HCT116 (cell line): ENCODE measurements at regions of chr3 and their contacts with region 1.

Region 1: DNA sequence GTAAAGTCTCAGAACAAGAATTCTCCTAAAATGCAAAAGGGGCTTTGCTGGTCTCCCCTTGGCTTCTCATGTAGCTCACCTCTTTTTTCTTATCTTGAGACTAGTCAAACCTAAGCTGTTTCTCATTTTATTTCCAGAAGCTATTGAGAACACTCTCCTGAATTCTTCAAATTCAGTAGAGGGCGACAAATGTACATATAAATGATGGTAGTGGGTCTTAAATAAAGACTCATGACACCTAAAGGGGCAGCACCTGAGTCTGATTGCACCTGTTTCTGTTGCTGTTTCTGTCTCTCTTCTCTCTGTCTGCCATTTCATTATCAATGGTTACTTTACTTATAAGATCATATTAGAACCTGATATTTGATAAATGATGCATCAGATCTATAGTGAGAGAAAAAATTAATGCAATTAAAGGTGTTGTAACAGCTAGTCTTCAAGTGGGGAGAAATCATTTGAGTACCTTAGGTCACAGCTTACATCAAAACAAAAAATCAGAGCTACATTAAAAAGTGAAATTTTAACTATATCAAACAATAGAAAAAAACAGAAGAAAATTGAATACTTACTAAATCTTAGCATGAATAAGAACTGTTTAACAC is 7.0 kb downstream of the ADIPOQ start:
- DNase-seq: peak; percentile 35
- ATAC-seq: peak; percentile 90
- H3K4me3 ChIP-seq: no peak overlapping the region
- H3K27ac ChIP-seq: no peak overlapping the region
- H3K4me1 ChIP-seq: no peaks in the 10 kb centered on the region
- H3K27me3 ChIP-seq: peaks cover 25% of the 10 kb centered on the region
- CTCF ChIP-seq: peak; percentile 29 to 91 (median 59); a peak in 5 of 6 replicates
- POLR2A ChIP-seq: no peak
- RAD21 ChIP-seq: peak; percentile 92

Region 2: DNA sequence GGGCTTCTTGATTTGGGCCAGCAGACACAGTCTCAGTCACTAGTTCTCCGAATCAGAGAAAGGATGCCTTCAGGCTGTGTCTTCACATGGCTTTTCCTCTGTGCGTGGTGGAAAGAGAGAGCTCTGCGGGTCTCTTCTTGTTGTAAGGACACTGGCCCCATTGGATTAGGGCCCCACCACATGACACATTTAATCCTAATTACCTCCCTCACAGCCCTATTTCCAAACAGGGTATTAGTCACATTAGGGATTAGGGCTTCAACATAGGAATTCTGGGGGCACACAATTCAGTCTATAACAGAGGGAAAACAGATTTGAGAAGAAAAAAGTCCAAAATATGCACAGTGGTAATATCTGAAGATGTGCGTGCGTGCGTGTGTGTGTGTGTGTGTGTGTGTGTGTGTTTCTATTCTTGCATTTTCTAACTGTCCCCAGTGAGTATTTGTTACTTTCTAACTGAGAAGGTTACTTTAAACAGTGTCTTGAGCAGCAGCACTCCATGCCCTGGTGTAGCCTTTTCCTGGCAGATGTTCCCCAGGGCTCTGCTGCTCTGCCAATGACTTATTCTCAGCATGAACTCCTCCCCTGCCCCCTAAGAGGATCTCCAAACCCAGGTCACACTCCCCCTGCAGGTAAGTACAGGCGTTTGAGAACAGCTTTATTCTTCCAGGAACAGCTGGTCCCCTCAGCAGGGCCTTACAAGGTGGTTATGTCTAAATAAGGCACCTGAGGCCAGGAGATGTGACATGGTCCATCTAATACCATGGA is 216.9 kb after region 1 on chr3:
- CTCF ChIA-PET with region 1: interaction called, 8 read pairs
- POLR2A ChIA-PET with region 1: no interaction called
- RAD21 ChIA-PET with region 1: no interaction called
- intact Hi-C with region 1: loop called (anchors 5 kb)
- DNase-seq: peak; percentile 47
- ATAC-seq: peak; percentile 94
- H3K4me3 ChIP-seq: no peak overlapping the region
- H3K27ac ChIP-seq: no peak overlapping the region
- H3K4me1 ChIP-seq: peaks cover 0 to 9% of the 10 kb centered on the region in 2 experiments; a peak in 1 of 4 replicates
- H3K27me3 ChIP-seq: no peaks in the 10 kb centered on the region
- CTCF ChIP-seq: peak; percentile 28 to 69 (median 54); a peak in 5 of 6 replicates
- POLR2A ChIP-seq: no peak
- RAD21 ChIP-seq: peak; percentile 52

Region 3: GRCh38 chr3:187150599-187150998 is 301.1 kb after region 1 on chr3:
- CTCF ChIA-PET with region 1: interaction called, 10 read pairs
- POLR2A ChIA-PET with region 1: no interaction called
- RAD21 ChIA-PET with region 1: no interaction called
- intact Hi-C with region 1: no loop called
- DNase-seq: no peak
- ATAC-seq: peak; percentile 63
- H3K4me3 ChIP-seq: no peak overlapping the region
- H3K27ac ChIP-seq: no peak overlapping the region
- H3K4me1 ChIP-seq: no peaks in the 10 kb centered on the region
- H3K27me3 ChIP-seq: no peaks in the 10 kb centered on the region
- CTCF ChIP-seq: peak; percentile 15 to 42 (median 21); a peak in 3 of 6 replicates
- POLR2A ChIP-seq: no peak
- RAD21 ChIP-seq: peak; percentile 30; the same call in 1 of the 2 replicates

Region 4: GRCh38 chr3:187223799-187224198 is 374.3 kb after region 1 on chr3:
- CTCF ChIA-PET with region 1: interaction called, 15 read pairs
- POLR2A ChIA-PET with region 1: no interaction called
- RAD21 ChIA-PET with region 1: no interaction called
- intact Hi-C with region 1: no loop called
- DNase-seq: no peak
- ATAC-seq: no peak
- H3K4me3 ChIP-seq: no peak overlapping the region
- H3K27ac ChIP-seq: no peak overlapping the region
- H3K4me1 ChIP-seq: peaks cover 0 to 6% of the 10 kb centered on the region in 2 experiments; a peak in 2 of 4 replicates
- H3K27me3 ChIP-seq: no peaks in the 10 kb centered on the region; the same call in 1 of the 2 replicates
- CTCF ChIP-seq: no peak
- POLR2A ChIP-seq: no peak
- RAD21 ChIP-seq: no peak

Region 5: GRCh38 chr3:187319699-187320302 is 470.3 kb after region 1 on chr3:
- CTCF ChIA-PET with region 1: interaction called, 14 read pairs
- POLR2A ChIA-PET with region 1: no interaction called
- RAD21 ChIA-PET with region 1: no interaction called
- intact Hi-C with region 1: loop called (anchors 5 kb)
- DNase-seq: peak; percentile 65
- ATAC-seq: peak; percentile 92
- H3K4me3 ChIP-seq: peak overlapping the region in 1 of 2 experiments; percentile 32; a peak in 3 of 4 replicates
- H3K27ac ChIP-seq: no peak overlapping the region
- H3K4me1 ChIP-seq: peaks cover 0 to 11% of the 10 kb centered on the region in 2 experiments; a peak in 1 of 4 replicates
- H3K27me3 ChIP-seq: peaks cover 33% of the 10 kb centered on the region
- CTCF ChIP-seq: peak; percentile 84 to 92 (median 88)
- POLR2A ChIP-seq: no peak
- RAD21 ChIP-seq: peak; percentile 94

Region 6: DNA sequence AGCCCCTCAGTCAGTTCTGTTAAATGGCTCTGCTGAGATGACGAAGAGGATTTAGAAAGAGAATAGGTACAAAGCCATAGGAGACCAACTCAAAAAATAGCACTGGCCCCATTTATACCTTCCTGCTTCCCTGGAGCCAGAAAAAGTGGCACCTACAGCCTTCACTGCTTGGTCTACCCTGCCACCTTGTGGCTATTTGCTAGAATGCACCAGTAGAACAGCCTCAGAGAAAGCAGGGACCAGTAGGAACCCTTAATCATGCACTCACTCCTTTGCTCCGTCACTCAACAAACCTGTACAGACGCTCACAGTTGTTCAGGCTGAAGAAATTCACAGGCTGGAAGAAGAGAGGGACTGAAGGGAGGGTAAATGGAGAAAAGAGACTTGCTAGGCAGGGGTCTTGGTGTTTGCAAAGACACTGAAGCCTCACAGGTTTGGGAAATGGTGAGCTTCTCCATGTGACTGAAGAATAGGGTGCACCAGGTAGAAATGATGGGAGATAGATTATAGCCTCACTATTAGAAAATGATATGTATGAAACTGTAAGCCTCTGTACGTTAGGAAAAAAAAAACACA is 865.0 kb after region 1 on chr3:
- CTCF ChIA-PET with region 1: interaction called, 3 read pairs
- POLR2A ChIA-PET with region 1: no interaction called
- RAD21 ChIA-PET with region 1: no interaction called
- intact Hi-C with region 1: loop called (anchors 10 kb)
- DNase-seq: peak; percentile 72
- ATAC-seq: peak; percentile 96
- H3K4me3 ChIP-seq: no peak overlapping the region
- H3K27ac ChIP-seq: no peak overlapping the region
- H3K4me1 ChIP-seq: peaks cover 3% of the 10 kb centered on the region in 2 experiments; a peak in 2 of 4 replicates
- H3K27me3 ChIP-seq: no peaks in the 10 kb centered on the region
- CTCF ChIP-seq: peak; percentile 85 to 95 (median 93)
- POLR2A ChIP-seq: no peak
- RAD21 ChIP-seq: peak; percentile 97